Activated naive CD4-positive, alpha-beta T cell treated with anti-CD3 and anti-CD28 coated beads, Interleukin-2, amount 10 ng/mL, durations not matched to agents 7 days and 5 days (primary cell): ENCODE measurements at regions of chr9 and their contacts with region 1.

Region 1: GRCh38 chr9:33415501-33416038 is 13.2 kb upstream of the AQP7 start:
- DNase-seq: peak; percentile 99
- H3K4me3 Mint-ChIP-seq: peak overlapping the region; percentile 68
- H3K27ac Mint-ChIP-seq: peak overlapping the region; percentile 98
- H3K4me1 Mint-ChIP-seq: peaks cover 69% of the 10 kb centered on the region
- H3K27me3 Mint-ChIP-seq: peaks cover 15% of the 10 kb centered on the region

Region 2: GRCh38 chr9:33404788-33405362 is 10.7 kb before region 1 on chr9:
- CTCF ChIA-PET with region 1: interaction called, 49 read pairs
- DNase-seq: no peak
- H3K4me3 Mint-ChIP-seq: no peak overlapping the region
- H3K27ac Mint-ChIP-seq: no peak overlapping the region
- H3K4me1 Mint-ChIP-seq: peaks cover 23% of the 10 kb centered on the region
- H3K27me3 Mint-ChIP-seq: peaks cover 27% of the 10 kb centered on the region

Region 3: DNA sequence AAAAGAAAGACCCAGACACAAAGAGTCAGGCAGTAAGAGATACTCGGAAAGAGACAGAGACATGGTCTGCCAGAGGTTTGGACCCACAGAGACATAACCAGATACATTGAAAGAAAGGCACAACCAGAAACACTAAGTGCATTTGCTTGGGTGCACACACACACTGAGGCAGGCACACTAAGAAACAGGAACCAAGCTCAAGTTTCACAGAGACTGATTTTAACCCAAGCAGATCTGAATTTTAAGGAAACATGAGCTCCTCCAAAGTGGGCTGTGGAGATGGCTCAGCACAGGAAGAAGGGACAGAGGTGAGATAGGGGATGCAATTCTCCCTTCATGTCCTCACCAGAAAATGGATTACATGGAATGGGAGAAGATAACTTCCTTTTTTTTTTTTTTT is 22.3 kb after region 1 on chr9:
- CTCF ChIA-PET with region 1: interaction called, 10 read pairs
- DNase-seq: no peak
- H3K4me3 Mint-ChIP-seq: no peak overlapping the region
- H3K27ac Mint-ChIP-seq: peak overlapping the region; percentile 75
- H3K4me1 Mint-ChIP-seq: peaks cover 80% of the 10 kb centered on the region
- H3K27me3 Mint-ChIP-seq: no peaks in the 10 kb centered on the region

Region 4: GRCh38 chr9:33446946-33447798 is 31.6 kb after region 1 on chr9 and contains the start of gene AQP3:
- CTCF ChIA-PET with region 1: interaction called, 193 read pairs
- DNase-seq: peak; percentile 91
- H3K4me3 Mint-ChIP-seq: peak within 1 kb of the TSS; percentile 91
- H3K27ac Mint-ChIP-seq: peak within 1 kb of the TSS; percentile 97
- H3K4me1 Mint-ChIP-seq: peaks cover 68% of the 10 kb centered on the region
- H3K27me3 Mint-ChIP-seq: no peaks in the 10 kb centered on the region

Region 5: GRCh38 chr9:33458444-33458843 is 42.9 kb after region 1 on chr9:
- CTCF ChIA-PET with region 1: interaction called, 193 read pairs
- DNase-seq: peak; percentile 59
- H3K4me3 Mint-ChIP-seq: no peak overlapping the region
- H3K27ac Mint-ChIP-seq: peak overlapping the region; percentile 86
- H3K4me1 Mint-ChIP-seq: peaks cover 57% of the 10 kb centered on the region
- H3K27me3 Mint-ChIP-seq: no peaks in the 10 kb centered on the region

Region 6: DNA sequence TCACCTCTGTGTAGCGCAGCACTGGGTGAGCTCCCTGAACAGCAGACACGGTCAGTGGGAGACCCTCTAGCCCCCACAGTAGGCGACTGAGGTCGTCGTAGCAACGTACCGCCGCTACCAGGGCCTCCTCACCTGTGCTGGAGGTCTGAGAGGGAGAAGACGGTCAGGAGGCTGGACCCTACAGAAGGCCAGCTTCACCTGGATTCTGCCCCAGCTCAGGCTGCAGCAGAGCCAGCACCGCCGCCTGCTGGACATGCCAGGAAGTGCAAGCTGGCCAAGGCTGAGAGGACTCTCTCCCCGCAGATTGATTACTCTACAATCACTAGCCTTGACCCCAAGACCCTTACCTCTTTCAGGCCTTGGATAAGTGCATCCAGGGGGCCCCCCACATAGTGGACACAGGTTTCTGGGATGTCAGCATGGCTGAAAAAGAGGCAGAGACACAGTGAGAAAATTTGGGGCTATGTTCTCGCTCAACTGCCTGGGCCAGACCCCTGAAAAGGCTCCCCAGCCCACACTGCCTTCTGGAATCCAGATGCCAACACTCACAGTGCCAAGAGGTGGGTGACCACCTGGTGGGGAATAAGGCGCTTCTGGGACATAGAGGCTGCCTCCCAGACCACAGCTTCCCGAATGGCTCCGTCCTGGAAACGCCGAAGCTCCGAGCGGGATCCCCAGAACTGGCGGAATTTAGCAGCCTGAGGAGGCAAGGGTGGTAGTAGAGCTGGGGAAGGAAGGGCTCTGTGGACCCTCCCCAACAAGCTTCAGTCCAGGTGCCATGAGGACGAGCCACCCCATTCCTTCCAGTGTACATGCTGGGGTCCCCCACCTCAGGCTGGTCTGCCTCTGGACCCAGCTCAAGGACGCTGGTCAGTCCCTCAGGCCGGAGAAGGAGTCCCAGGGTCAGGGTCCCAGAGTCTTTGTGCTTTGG is 51.3 kb after region 1 on chr9:
- CTCF ChIA-PET with region 1: interaction called, 77 read pairs
- DNase-seq: peak; percentile 84
- H3K4me3 Mint-ChIP-seq: no peak overlapping the region
- H3K27ac Mint-ChIP-seq: peak overlapping the region; percentile 42
- H3K4me1 Mint-ChIP-seq: peaks cover 9% of the 10 kb centered on the region
- H3K27me3 Mint-ChIP-seq: no peaks in the 10 kb centered on the region

Region 7: DNA sequence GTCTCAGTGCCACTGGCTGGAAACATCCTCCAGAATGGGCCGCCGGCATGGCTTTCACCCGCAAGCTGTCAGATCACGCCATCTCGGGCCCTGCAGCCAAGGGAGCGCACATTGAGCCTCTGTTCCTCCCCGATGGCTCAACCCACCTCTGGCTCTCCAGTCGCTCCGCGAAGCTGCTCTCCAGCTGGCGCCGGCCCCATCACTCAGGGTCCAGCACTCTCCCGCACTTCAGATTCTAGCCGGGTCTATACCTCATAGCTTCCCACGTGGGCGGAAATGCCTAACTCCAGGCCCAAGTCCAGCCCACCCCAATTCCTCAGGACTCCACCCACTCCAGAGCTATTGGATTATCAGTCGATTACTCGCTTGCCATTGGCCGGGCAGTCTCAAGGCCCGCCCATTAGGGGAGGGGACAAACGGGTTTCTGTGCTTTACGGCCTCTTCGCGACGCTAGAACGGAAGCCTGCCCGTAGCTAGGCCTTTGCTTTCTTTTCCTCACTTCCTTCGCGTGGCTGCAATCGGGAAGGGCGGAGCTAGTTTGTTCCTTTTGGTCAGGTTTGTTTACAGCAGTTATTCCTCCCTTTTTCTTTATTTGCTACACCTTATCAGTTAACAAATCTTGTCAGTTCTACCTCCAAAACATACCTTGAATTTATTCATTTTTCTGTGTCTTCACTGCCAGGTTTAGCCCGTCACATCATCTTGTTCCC is 58.2 kb after region 1 on chr9 and contains the start of gene NOL6:
- CTCF ChIA-PET with region 1: interaction called, 11 read pairs
- DNase-seq: peak; percentile 99
- H3K4me3 Mint-ChIP-seq: peak within 1 kb of the TSS; percentile 96
- H3K27ac Mint-ChIP-seq: peak within 1 kb of the TSS; percentile 93
- H3K4me1 Mint-ChIP-seq: peaks cover 30% of the 10 kb centered on the region
- H3K27me3 Mint-ChIP-seq: no peaks in the 10 kb centered on the region